Activated CD4-positive, alpha-beta T cell treated with anti-CD3 and anti-CD28 coated beads, Interleukin-2, amount 10 ng/mL, durations not matched to agents 24 days and 14 days (primary cell): ENCODE measurements at regions of chr17 and their contacts with region 1.

Region 1: GRCh38 chr17:31321481-31321880 is at the start of gene EVI2A:
- DNase-seq: peak; percentile 94
- H3K4me3 Mint-ChIP-seq: peak within 1 kb of the TSS; percentile 89
- H3K27ac Mint-ChIP-seq: peak within 1 kb of the TSS; percentile 97
- H3K4me1 Mint-ChIP-seq: peaks cover 26% of the 10 kb centered on the region
- H3K27me3 Mint-ChIP-seq: no peaks in the 10 kb centered on the region
- total RNA-seq, gene EVI2A: 30.4 and 31.5 TPM in 2 replicates

Region 2: DNA sequence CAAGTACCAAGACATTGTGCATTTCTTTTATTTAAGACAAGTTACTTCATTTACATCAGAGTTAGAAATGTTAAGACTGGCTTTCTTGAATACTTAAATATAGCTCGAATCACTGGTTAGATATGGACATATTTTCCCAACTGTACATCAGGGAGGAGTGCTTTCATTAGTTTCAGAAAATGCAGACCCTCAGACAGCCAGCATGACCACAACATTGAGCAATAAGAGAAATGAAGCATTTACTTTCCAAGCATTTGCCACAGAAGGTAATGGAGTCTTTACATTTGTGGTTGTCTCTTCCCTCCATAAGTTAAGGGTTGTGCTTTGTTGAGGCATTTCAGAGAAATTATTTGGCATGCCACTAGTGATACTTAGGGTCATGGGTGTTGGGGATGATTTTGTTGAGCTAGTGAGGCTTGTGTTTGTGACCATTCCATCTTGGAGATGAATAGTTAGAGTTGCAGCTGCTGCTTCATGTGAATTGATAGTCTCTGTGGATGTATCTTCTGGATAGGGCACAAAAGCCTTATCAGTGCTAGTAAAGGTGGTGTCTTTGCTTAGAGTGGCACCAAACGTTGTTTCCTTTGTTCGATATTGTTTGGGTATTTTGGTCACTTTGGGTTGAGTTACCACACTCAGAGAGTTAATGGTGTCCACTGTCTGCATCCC is 26.5 kb before region 1 on chr17:
- intact Hi-C with region 1: no loop called
- DNase-seq: no peak
- H3K4me3 Mint-ChIP-seq: no peak overlapping the region
- H3K27ac Mint-ChIP-seq: no peak overlapping the region
- H3K4me1 Mint-ChIP-seq: peaks cover 8% of the 10 kb centered on the region
- H3K27me3 Mint-ChIP-seq: no peaks in the 10 kb centered on the region

Region 3: DNA sequence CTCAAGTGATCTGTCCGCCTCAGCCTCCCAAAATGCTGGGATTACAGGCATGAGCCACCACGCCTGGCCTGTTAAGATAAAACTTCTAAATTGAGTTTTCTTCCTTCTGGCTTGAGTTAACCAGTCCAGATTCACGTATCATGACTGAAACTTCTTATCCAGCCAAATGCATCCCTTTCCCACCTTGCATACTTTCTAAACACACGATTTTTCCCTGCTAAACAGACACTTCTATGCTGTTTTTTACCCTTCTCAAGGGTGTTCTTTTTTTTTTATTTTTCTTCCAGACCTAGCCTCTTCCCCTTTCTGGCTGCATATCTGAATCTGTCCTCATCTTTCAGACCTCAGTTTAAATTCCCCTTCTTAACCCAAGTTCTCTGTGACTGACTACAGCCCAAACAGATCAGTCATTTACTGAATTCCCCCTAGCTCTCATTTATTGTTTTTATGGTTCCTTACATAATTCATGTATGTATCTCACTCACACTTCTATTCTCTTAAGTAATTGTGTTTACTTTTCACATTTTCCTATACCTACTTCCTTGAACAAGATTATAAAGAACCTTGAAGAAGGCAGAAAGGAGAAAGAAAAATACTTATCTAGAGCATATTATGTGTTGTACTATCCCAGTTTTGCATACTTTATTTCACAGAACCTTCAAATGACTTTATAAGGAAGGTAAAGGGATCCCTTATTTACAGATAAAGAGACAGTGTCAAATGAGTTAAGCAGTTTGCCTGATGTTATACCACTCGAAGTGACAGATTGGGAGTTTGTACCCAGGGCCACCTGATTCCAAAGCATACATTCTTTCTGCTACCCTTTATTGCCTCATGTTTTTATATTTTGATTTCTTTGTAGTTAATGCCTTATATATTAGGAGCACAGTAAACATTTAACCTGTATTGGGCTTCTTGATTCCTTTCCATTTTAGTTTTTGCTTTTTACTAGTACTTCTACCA is 12.8 kb before region 1 on chr17:
- intact Hi-C with region 1: loop called (anchors 1 kb)
- DNase-seq: no peak
- H3K4me3 Mint-ChIP-seq: peak overlapping the region; percentile 93
- H3K27ac Mint-ChIP-seq: peak overlapping the region; percentile 91
- H3K4me1 Mint-ChIP-seq: peaks cover 50% of the 10 kb centered on the region
- H3K27me3 Mint-ChIP-seq: no peaks in the 10 kb centered on the region

Region 4: GRCh38 chr17:31487648-31488263 is 166.3 kb after region 1 on chr17:
- intact Hi-C with region 1: loop called (anchors 2 kb)
- DNase-seq: peak; percentile 97
- H3K4me3 Mint-ChIP-seq: peak overlapping the region; percentile 94
- H3K27ac Mint-ChIP-seq: peak overlapping the region; percentile 38
- H3K4me1 Mint-ChIP-seq: peaks cover 43% of the 10 kb centered on the region
- H3K27me3 Mint-ChIP-seq: peaks cover 5% of the 10 kb centered on the region